ENCODE measurements at regions of chr15 and their contacts with region 1.

Region 1: GRCh38 chr15:89948796-89949195 is 36.0 kb upstream of the ARPIN start:
- DNase-seq: no peak
- H3K4me3 ChIP-seq: no peak overlapping the region
- H3K27ac ChIP-seq: no peak overlapping the region
- H3K4me1 ChIP-seq: no peaks in the 10 kb centered on the region
- H3K27me3 ChIP-seq: no peaks in the 10 kb centered on the region
- CTCF ChIP-seq: no peak
- POLR2A ChIP-seq: no peak

Region 2: GRCh38 chr15:89926158-89926557 is 22.6 kb before region 1 on chr15:
- CTCF ChIA-PET with region 1: no interaction called
- POLR2A ChIA-PET with region 1: no interaction called
- dilution Hi-C with region 1: no loop called
- intact Hi-C with region 1: loop called (anchors 1 kb)
- DNase-seq: no peak
- H3K4me3 ChIP-seq: no peak overlapping the region
- H3K27ac ChIP-seq: no peak overlapping the region
- H3K4me1 ChIP-seq: no peaks in the 10 kb centered on the region
- H3K27me3 ChIP-seq: peaks cover 0 to 3% of the 10 kb centered on the region in 2 experiments
- CTCF ChIP-seq: no peak
- POLR2A ChIP-seq: no peak

Region 3: DNA sequence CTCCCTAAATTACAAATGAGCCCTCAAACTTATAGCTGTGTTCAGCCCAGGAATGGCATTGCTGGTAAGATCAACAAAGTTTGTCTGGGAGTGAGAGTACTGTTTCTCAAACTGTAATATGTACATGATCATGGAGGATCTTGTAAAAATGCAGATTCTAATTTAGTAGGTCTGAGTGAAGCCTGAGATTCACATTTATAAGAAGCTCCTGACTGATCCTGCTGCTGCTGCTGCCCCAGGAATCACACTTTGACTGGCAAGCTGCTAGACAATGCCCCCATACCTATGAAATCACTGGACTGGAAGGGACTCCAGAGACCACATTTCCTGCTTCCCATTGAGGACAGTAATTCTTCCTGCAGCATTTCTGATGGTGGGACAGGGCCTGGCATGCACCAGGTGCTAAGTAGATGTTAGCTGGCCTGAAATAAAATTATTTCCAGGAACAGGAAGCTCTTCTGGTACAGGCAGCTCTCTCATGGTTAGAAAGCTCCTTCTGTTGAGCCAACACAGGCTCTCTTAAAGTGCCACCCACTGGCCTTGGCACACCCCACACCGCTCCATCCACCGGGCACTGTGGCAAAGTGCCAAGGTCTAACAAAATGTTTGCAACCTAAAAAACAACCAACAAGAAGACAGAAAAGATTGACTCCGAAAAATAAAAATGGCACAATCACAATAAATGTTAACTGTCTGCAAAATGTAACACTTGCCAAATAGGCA is 15.6 kb after region 1 on chr15:
- CTCF ChIA-PET with region 1: no interaction called
- POLR2A ChIA-PET with region 1: no interaction called
- dilution Hi-C with region 1: no loop called
- intact Hi-C with region 1: no loop called
- DNase-seq: no peak
- H3K4me3 ChIP-seq: no peak overlapping the region
- H3K27ac ChIP-seq: no peak overlapping the region
- H3K4me1 ChIP-seq: no peaks in the 10 kb centered on the region
- H3K27me3 ChIP-seq: no peaks in the 10 kb centered on the region
- CTCF ChIP-seq: no peak
- POLR2A ChIP-seq: no peak